ENCODE measurements at regions of chrX and their contacts with region 1.

Region 1: GRCh38 chrX:100768679-100769338 is 36.9 kb upstream of the SYTL4 start:
- DNase-seq: peak; percentile 79 to 82 (median 80)
- H3K4me3 ChIP-seq: no peak overlapping the region
- H3K4me3 Mint-ChIP-seq: no peak overlapping the region
- H3K27ac ChIP-seq: no peak overlapping the region
- H3K27ac Mint-ChIP-seq: no peak overlapping the region
- H3K4me1 ChIP-seq: no peaks in the 10 kb centered on the region
- H3K4me1 Mint-ChIP-seq: no peaks in the 10 kb centered on the region
- H3K27me3 ChIP-seq: no peaks in the 10 kb centered on the region
- H3K27me3 Mint-ChIP-seq: peaks cover 0 to 1% of the 10 kb centered on the region in 2 donors

Region 2: GRCh38 chrX:100674705-100675104 is 94.1 kb before region 1 on chrX:
- CTCF ChIA-PET with region 1: interaction called, 123 read pairs
- POLR2A ChIA-PET with region 1: no interaction called
- intact Hi-C with region 1: loop called (anchors 1 kb)
- DNase-seq: no peak
- H3K4me3 ChIP-seq: no peak overlapping the region
- H3K4me3 Mint-ChIP-seq: peak overlapping the region in 6 of 8 donors; percentile 3 to 55 (median 18)
- H3K27ac ChIP-seq: no peak overlapping the region
- H3K27ac Mint-ChIP-seq: peak overlapping the region in 3 of 7 donors; percentile 2 to 42 (median 41)
- H3K4me1 ChIP-seq: peaks cover 19% of the 10 kb centered on the region
- H3K4me1 Mint-ChIP-seq: peaks cover 13 to 19% (median 17%) of the 10 kb centered on the region in 4 donors
- H3K27me3 ChIP-seq: no peaks in the 10 kb centered on the region
- H3K27me3 Mint-ChIP-seq: no peaks in the 10 kb centered on the region

Region 3: DNA sequence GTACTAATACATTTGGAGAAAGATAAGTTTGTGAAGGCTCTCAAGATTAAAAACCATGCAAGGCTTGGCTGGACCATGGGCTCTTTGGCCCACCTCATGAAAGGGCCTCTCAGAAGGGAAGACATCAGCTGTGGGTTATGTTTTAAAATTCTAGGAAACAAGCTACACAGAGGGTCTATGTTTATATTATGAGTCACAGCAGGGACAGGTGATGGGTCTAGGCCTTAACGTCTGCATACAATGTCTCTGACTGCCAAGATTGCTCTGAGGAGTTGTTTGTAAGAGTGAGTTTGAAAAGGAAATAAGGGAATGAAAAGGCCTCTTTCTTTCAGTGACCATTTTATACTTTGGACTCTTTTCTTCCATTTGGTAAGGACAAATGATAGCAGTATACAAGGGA is 967.8 kb after region 1 on chrX:
- CTCF ChIA-PET with region 1: no interaction called
- POLR2A ChIA-PET with region 1: no interaction called
- intact Hi-C with region 1: no loop called
- DNase-seq: no peak
- H3K4me3 ChIP-seq: no peak overlapping the region
- H3K4me3 Mint-ChIP-seq: no peak overlapping the region
- H3K27ac ChIP-seq: no peak overlapping the region
- H3K27ac Mint-ChIP-seq: no peak overlapping the region
- H3K4me1 ChIP-seq: no peaks in the 10 kb centered on the region
- H3K4me1 Mint-ChIP-seq: no peaks in the 10 kb centered on the region
- H3K27me3 ChIP-seq: no peaks in the 10 kb centered on the region
- H3K27me3 Mint-ChIP-seq: peaks cover 0 to 2% of the 10 kb centered on the region in 2 donors